ENCODE measurements at regions of chr2 and their contacts with region 1.

Region 1: GRCh38 chr2:217785544-217786045 is 217.2 kb downstream of the TNS1 start:
- H3K4me3 ChIP-seq: no peak overlapping the region
- H3K27ac ChIP-seq: no peak overlapping the region
- H3K4me1 ChIP-seq: no peaks in the 10 kb centered on the region
- CTCF ChIP-seq: peak; percentile 89

Region 2: GRCh38 chr2:217766356-217766755 is 19.2 kb before region 1 on chr2:
- CTCF ChIA-PET with region 1: interaction called, 14 read pairs
- POLR2A ChIA-PET with region 1: no interaction called
- H3K4me3 ChIP-seq: no peak overlapping the region
- H3K27ac ChIP-seq: no peak overlapping the region
- H3K4me1 ChIP-seq: no peaks in the 10 kb centered on the region
- CTCF ChIP-seq: no peak

Region 3: DNA sequence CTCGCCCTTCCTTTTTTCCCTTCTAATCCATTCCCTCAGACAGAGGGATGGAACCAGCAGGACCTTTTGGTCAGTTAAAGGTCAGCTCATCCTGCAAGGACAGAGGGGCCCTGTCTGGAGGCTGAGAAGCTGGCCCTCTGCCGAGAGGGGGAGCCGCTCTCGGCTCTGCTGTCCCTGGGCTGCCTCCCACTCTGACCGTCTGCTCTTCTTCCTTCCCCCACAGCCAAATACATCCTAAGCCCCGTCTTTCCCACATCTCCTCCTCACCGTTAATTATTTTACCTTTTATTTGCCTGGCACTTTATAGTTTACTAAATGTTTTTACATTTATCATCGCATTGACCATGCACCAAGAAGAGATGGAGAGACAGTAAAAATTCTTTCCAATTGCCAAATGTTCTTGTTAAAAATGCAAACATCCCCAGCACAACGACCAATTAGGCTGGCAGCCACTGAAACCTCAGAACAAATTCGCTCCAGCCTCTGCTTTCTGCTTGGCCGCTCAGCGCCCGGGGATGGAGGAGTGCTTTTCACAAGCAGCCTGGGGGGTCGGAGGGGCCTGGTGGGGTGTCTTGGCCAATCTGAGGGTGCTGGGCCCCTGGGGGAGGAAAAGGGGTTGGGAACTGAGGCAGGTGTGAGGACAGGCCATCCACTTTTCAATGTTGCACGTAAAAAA is 93.5 kb after region 1 on chr2:
- CTCF ChIA-PET with region 1: interaction called, 387 read pairs
- POLR2A ChIA-PET with region 1: no interaction called
- H3K4me3 ChIP-seq: no peak overlapping the region
- H3K27ac ChIP-seq: no peak overlapping the region
- H3K4me1 ChIP-seq: no peaks in the 10 kb centered on the region
- CTCF ChIP-seq: no peak

Region 4: DNA sequence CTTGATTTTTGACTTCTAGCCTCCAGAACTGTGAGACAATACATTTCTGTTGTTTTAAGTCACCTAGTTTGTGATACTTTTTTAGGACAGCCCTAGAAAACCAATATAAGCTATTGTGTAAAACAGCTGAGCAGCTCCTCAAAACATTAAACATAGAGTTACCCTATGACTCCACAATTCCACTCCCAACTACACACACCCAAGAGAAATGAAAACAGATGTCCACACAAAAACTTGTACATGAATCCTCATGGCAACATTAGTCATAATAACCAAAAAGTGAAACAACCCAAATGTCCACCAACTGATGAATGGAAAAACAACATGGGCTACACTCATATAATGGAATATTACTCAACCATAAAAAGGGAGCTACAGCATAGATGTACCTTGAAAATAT is 184.6 kb after region 1 on chr2:
- CTCF ChIA-PET with region 1: interaction called, 12 read pairs
- POLR2A ChIA-PET with region 1: no interaction called
- H3K4me3 ChIP-seq: no peak overlapping the region
- H3K27ac ChIP-seq: no peak overlapping the region
- H3K4me1 ChIP-seq: no peaks in the 10 kb centered on the region
- CTCF ChIP-seq: no peak

Region 5: DNA sequence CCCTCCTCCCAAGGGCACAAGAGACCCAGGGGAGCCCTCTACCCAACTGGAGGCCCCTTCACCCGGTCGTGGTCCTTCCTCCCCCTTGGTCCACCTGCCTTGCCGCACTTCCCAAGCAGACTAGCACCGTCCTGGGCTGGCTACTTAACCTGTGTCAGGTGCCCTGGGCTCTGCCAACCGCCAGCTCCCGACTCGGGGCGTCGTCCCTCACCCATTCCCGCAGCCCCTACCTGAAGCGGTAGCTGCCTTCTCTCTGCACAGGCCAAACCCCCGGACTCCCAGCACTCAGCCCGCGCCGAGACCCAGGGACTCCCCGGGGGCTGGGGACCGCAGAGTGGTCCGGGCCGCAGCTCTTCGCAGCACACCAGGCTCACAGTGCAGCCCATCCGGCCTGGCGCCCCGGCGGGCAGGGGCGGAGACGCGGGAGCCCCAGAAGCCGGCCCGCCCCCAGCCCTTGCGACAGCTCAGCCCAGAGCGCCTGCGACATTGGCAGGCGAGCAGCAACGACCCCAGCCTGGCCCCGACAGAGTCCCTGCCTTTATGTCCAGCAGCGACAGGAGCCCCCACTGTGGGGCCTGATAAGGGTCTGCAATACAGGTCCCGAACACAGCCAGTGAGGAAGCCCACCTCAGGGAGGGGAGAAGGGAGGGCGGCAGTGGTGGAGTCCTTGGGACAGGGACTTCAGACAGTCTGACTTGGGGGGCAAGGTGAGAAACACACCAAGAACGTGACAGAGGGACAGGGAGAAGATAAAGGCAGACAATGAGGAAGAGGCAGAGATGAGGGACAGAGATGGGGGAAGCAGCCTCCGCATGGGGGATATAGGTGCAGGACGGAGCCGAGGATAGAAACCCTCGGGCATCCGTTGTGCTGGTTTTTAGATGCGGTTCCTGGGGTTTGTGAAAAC is 248.2 kb after region 1 on chr2:
- CTCF ChIA-PET with region 1: interaction called, 25 read pairs
- POLR2A ChIA-PET with region 1: no interaction called
- H3K4me3 ChIP-seq: no peak overlapping the region
- H3K27ac ChIP-seq: no peak overlapping the region
- H3K4me1 ChIP-seq: no peaks in the 10 kb centered on the region
- CTCF ChIP-seq: no peak

Region 6: GRCh38 chr2:218072478-218073024 is 287.0 kb after region 1 on chr2:
- CTCF ChIA-PET with region 1: interaction called, 14 read pairs
- POLR2A ChIA-PET with region 1: no interaction called
- H3K4me3 ChIP-seq: no peak overlapping the region
- H3K27ac ChIP-seq: no peak overlapping the region
- H3K4me1 ChIP-seq: no peaks in the 10 kb centered on the region
- CTCF ChIP-seq: no peak

Measured in HEK293 (cell line).